Activated CD4-positive, alpha-beta memory T cell treated with anti-CD3 and anti-CD28 coated beads, Interleukin-2, amount 10 ng/mL, durations not matched to agents 7 days and 5 days (primary cell): ENCODE measurements at regions of chr11 and their contacts with region 1.

Region 1: GRCh38 chr11:33161120-33162005 is at the start of gene CSTF3:
- DNase-seq: peak; percentile 96
- H3K4me3 Mint-ChIP-seq: peak within 1 kb of the TSS; percentile 99
- H3K27ac Mint-ChIP-seq: peak within 1 kb of the TSS; percentile 89
- H3K4me1 Mint-ChIP-seq: peaks cover 41% of the 10 kb centered on the region
- H3K27me3 Mint-ChIP-seq: no peaks in the 10 kb centered on the region
- total RNA-seq, gene CSTF3: 26.5 to 30.2 TPM

Region 2: DNA sequence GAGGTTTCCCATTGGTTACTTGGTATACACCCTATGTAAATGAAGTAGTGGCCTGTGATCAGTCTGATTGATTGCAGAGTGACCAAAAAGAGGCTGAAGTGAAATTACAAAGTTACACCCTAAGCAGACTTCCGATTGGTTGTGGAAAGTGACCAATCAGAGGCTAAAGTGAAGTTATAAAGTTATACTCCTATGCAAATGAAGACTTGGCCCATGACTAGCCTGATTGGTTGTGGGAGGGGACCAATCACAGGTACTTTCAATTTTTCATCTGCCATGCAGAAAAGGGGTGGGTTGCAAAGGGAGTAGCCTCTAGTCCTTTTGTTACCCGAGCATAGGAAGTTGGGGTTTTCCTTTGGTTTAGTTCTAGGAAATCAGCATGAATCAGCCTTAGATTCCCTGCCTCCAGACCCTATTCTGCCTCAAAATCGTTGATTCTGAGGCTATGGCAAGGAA is 18.0 kb after region 1 on chr11:
- CTCF ChIA-PET with region 1: interaction called, 15 read pairs
- POLR2A ChIA-PET with region 1: interaction called, 12 read pairs
- DNase-seq: peak; percentile 39
- H3K4me3 Mint-ChIP-seq: no peak overlapping the region
- H3K27ac Mint-ChIP-seq: peak overlapping the region; percentile 28
- H3K4me1 Mint-ChIP-seq: peaks cover 28% of the 10 kb centered on the region
- H3K27me3 Mint-ChIP-seq: no peaks in the 10 kb centered on the region

Region 3: DNA sequence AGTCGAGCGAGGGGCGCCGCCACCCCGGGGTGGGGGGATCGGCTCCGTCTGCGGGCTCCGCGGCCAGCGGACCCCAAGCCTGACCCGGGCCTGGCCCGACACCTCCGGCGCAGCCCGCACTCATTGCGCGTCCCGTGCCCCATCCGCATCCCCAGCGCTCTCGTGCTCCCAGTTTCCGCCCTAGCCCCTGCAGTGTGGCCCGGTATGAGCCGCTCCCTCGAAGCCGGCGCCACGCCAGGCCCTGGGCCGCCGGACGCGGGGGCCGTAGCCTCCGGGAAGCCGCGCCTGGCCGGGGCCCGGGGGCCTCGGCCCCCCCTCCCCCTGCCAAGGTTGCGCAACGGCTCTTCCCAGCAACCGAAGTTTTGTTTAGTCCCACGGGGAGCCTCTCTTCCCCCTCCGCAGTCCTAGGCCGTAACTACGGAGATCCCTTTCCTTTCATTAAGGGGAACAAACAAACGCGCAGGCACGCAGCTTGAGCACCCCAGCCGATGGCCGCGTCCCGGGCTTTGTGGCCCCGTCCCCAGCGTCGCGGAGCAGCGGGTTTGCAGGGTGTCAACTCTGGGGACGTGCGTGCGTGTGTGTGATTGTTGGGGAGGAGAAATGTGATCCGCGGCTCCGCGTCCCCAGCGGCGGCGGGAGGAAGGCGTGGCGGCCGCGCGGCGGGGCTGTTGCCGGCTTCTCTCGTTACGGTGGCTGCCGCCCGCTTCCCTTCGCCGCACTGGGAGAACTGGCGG is 96.7 kb after region 1 on chr11:
- CTCF ChIA-PET with region 1: interaction called, 4 read pairs
- POLR2A ChIA-PET with region 1: interaction called, 25 read pairs
- DNase-seq: peak; percentile 80
- H3K4me3 Mint-ChIP-seq: peak overlapping the region; percentile 98
- H3K27ac Mint-ChIP-seq: peak overlapping the region; percentile 99
- H3K4me1 Mint-ChIP-seq: peaks cover 43% of the 10 kb centered on the region
- H3K27me3 Mint-ChIP-seq: no peaks in the 10 kb centered on the region

Region 4: GRCh38 chr11:33329705-33330329 is 168.5 kb after region 1 on chr11:
- CTCF ChIA-PET with region 1: interaction called, 49 read pairs
- POLR2A ChIA-PET with region 1: interaction called, 4 read pairs
- DNase-seq: peak; percentile 45
- H3K4me3 Mint-ChIP-seq: no peak overlapping the region
- H3K27ac Mint-ChIP-seq: no peak overlapping the region
- H3K4me1 Mint-ChIP-seq: no peaks in the 10 kb centered on the region
- H3K27me3 Mint-ChIP-seq: no peaks in the 10 kb centered on the region